ENCODE measurements at regions of chr3 and their contacts with region 1.

Region 1: GRCh38 chr3:177197041-177197727 is at the start of gene TBL1XR1:
- DNase-seq: peak; percentile 96
- H3K4me3 Mint-ChIP-seq: peak within 1 kb of the TSS; percentile 88
- H3K27ac Mint-ChIP-seq: peak within 1 kb of the TSS; percentile 98
- H3K4me1 Mint-ChIP-seq: peaks cover 52% of the 10 kb centered on the region
- H3K27me3 Mint-ChIP-seq: no peaks in the 10 kb centered on the region
- total RNA-seq, gene TBL1XR1: 160 and 178 TPM in 2 replicates

Region 2: GRCh38 chr3:177057768-177058167 is 139.4 kb before region 1 on chr3:
- intact Hi-C with region 1: loop called (anchors 2 kb)
- DNase-seq: peak; percentile 76
- H3K4me3 Mint-ChIP-seq: no peak overlapping the region
- H3K27ac Mint-ChIP-seq: no peak overlapping the region
- H3K4me1 Mint-ChIP-seq: peaks cover 19% of the 10 kb centered on the region
- H3K27me3 Mint-ChIP-seq: no peaks in the 10 kb centered on the region

Region 3: DNA sequence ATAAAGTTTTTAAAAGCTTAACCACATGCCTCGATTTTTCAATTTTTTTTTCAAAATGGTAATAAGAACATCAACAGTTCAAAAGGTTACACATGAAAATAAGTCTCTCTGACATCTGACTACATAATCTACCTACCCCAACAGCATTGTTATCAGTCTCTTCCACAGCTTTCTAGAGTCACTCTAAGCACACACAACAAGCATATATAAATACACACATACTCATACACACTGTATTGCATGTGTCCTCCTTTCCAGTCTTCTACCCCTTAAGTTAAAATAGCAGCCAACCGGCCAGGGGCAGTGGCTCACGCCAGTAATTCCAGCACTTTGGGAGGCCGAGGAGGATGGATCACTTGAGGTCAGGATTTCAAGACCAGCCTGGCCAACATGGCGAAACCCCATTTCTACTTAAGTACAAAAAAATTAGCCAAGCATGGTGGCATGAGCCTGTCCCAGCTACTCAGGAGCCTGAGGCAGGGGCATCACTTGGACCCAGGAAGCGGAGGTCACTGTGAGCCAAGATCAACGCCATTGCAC is 12.1 kb before region 1 on chr3:
- intact Hi-C with region 1: loop called (anchors 1 kb)
- DNase-seq: no peak
- H3K4me3 Mint-ChIP-seq: peak overlapping the region; percentile 15
- H3K27ac Mint-ChIP-seq: peak overlapping the region; percentile 71
- H3K4me1 Mint-ChIP-seq: peaks cover 39% of the 10 kb centered on the region
- H3K27me3 Mint-ChIP-seq: no peaks in the 10 kb centered on the region

Region 4: DNA sequence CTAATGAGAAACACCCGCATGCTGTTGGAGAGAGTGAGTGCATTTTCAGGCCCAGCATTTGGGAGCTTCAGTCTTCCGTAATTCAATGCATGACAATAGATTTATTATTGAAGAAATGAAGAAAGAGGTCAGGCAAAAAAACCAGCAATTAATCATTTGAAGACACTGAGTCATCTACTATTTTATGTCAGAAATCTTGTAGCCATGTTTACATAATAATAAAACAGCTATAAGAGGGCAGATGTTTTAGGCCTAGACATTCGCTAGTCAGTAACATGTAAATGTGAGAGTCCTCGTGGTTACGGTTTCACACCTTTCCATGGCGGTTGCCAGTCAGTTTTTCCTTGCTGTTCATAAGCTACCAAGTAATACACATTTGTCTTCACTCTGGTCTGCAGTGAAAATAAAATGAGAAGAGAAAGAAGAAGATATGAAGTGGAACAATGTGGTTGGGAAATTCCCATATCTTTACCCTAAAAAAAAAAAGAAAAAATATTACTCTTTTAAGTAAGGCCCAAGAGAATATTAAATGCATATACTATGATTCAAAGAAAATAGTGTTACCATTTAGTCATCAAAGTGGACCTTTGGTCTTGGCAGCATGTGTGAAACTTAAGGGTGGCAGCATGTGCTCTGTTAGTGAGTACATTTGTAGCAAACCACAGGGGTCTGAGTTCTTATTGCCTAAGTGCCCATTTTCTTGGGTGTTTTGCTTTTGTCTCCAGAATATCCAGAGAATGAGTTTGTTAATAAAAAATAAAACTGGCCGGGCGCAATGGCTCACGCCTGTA is 140.6 kb after region 1 on chr3:
- intact Hi-C with region 1: loop called (anchors 1 kb)
- DNase-seq: peak; percentile 87
- H3K4me3 Mint-ChIP-seq: peak overlapping the region; percentile 29
- H3K27ac Mint-ChIP-seq: peak overlapping the region; percentile 84
- H3K4me1 Mint-ChIP-seq: peaks cover 41% of the 10 kb centered on the region
- H3K27me3 Mint-ChIP-seq: no peaks in the 10 kb centered on the region

Region 5: GRCh38 chr3:177597311-177598096 is 400.3 kb after region 1 on chr3:
- intact Hi-C with region 1: loop called (anchors 5 kb)
- DNase-seq: peak; percentile 77
- H3K4me3 Mint-ChIP-seq: peak overlapping the region; percentile 77
- H3K27ac Mint-ChIP-seq: peak overlapping the region; percentile 95
- H3K4me1 Mint-ChIP-seq: peaks cover 55% of the 10 kb centered on the region
- H3K27me3 Mint-ChIP-seq: no peaks in the 10 kb centered on the region

Region 6: DNA sequence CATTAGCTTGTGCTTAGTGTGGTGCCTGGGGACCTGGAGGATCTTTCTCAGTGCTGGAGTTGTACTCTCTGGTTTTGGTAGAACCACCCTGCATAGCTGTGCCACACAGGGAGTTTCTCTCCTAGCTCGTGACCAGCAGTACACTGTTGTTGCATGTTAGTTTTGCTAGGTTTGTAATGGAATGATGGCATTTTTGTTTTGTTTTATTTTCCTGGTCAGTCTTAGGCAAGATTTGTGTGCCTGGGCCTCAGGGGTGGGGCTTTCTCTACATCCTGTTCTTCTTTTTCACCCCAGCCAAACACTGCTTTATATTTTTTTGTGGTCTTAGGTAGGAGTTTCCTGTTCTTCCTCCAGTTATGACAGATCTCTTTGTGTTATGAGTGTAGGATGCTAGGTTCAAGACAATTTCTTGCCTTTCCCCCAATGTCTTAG is 804.5 kb after region 1 on chr3:
- intact Hi-C with region 1: loop called (anchors 5 kb)
- DNase-seq: peak; percentile 77
- H3K4me3 Mint-ChIP-seq: peak overlapping the region; percentile 63
- H3K27ac Mint-ChIP-seq: peak overlapping the region; percentile 91
- H3K4me1 Mint-ChIP-seq: peaks cover 36% of the 10 kb centered on the region
- H3K27me3 Mint-ChIP-seq: no peaks in the 10 kb centered on the region

Measured in activated CD4-positive, alpha-beta T cell treated with anti-CD3 and anti-CD28 coated beads, Interleukin-2, amount 10 ng/mL, durations not matched to agents 24 days and 14 days (primary cell).